PC-9 (cell line): ENCODE measurements at regions of chr3 and their contacts with region 1.

Region 1: DNA sequence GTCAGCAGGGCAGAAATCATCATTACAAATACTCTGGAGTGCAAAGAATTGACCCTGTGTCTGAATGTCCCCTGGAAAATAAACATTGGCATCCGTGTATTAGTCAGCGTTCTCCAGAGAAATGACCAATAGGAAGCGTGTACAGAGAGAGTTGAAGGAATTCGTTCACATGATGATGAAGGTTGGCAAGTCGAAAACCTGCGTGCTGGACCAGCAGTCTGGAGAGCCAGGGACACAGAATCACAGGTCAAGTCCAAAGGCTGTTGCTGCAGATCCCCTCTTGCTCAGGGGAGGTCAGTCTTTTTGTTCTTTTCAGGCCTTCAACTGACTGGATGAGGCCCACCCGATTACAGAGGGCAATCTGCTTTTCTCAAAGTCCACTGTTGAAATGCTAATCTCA is 16.6 kb downstream of the GP9 start:
- DNase-seq: no peak
- H3K4me3 ChIP-seq: no peak overlapping the region
- H3K27ac ChIP-seq: no peak overlapping the region
- H3K4me1 ChIP-seq: no peaks in the 10 kb centered on the region
- H3K27me3 ChIP-seq: no peaks in the 10 kb centered on the region
- CTCF ChIP-seq: no peak

Region 2: GRCh38 chr3:128845778-128846485 is 231.3 kb before region 1 on chr3:
- CTCF ChIA-PET with region 1: interaction called, 10 read pairs
- POLR2A ChIA-PET with region 1: no interaction called
- intact Hi-C with region 1: no loop called
- DNase-seq: peak; percentile 47 to 86
- H3K4me3 ChIP-seq: peak overlapping the region; percentile 27; the same call in 1 of the 2 replicates
- H3K27ac ChIP-seq: no peak overlapping the region
- H3K4me1 ChIP-seq: no peaks in the 10 kb centered on the region
- H3K27me3 ChIP-seq: no peaks in the 10 kb centered on the region
- CTCF ChIP-seq: peak; percentile 60

Region 3: DNA sequence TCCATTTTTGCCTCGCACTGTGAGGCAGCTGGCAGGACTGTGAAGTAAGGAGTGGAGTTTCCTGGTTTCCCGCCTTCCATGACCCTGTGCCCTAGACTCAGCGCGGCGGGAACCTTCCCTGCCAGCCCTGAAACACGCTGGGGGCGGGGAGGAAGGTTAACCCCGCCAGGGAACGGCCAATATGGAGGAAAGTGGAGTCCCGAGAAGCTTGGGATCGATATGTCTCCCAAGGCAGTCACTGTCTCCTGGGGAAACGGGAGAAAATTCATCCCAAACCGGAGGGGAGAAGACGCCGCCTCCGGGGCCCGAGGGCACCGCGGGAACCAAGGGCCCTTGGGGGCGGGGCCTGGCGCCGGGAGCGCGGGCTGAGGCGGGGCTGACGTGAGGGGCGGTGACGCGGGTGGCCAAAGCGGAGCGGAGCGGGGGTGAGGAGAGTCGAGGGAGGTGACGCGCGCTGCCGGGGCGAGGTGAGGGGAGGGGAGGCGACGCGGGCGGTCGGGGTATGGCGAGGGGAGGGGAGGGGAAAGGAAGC is 201.3 kb after region 1 on chr3 and contains the start of gene HMCES:
- CTCF ChIA-PET with region 1: no interaction called
- POLR2A ChIA-PET with region 1: no interaction called
- intact Hi-C with region 1: no loop called
- DNase-seq: peak; percentile 69 to 97
- H3K4me3 ChIP-seq: peak within 1 kb of the TSS; percentile 80
- H3K27ac ChIP-seq: peak within 1 kb of the TSS; percentile 58
- H3K4me1 ChIP-seq: peaks cover 18% of the 10 kb centered on the region
- H3K27me3 ChIP-seq: no peaks in the 10 kb centered on the region
- CTCF ChIP-seq: no peak
- total RNA-seq, gene HMCES: 60.9 and 62.7 TPM in 2 replicates